Mammary epithelial cell (primary cell): ENCODE measurements at regions of chr12 and their contacts with region 1.

Region 1: DNA sequence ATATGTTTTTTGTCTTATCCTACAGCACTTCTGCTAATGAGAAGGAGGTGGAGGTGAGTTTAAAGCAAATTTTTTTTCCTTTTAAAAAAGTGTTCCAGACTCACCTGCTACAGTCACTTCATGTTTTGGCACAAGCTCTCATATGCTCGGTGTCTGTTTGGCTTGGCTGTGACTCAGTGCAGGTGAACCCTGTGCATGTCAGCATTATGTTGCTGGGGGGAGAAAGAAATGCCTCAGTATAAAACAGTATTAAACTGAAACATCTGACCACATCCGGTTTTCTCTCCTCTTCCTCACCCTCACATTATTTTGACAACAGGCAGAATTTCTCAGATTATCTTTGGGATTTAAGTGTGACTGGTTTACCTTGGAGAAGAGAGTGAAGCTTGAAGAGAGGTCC is 105.2 kb downstream of the DNAI7 start:
- DNase-seq: peak; percentile 73
- H3K4me3 ChIP-seq: no peak overlapping the region
- H3K27ac ChIP-seq: no peak overlapping the region
- H3K4me1 ChIP-seq: peaks cover 9% of the 10 kb centered on the region
- H3K27me3 ChIP-seq: no peaks in the 10 kb centered on the region
- CTCF ChIP-seq: no peak

Region 2: DNA sequence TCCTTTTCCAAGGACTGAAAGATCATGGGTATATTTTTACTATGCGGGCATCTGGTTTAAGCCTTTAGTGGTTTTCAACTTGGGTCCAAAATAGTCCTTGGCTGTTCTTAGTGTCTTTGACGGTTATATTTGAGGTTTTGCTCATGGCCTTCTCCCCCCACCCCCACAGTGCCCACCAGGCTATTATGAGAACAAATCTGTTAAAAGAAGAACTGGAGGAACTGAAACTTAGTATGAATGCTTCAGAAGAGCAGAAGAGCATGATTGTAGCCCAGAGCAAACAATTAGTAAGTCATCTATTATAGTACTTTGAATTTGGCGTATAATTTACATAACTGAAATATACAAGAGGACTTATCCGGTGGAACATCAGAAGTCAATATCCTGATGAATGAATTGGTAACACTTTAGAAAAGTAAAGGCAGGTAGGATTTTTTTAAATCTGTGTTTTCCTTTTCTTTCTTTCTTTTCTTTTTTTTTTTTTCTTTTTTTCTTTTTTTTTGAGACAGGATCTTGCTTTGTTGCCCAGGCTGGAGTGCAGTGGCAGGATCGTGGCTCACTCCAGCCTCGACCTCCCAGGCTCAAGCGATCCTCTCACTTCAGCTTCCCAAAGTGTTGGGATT is 69.0 kb before region 1 on chr12:
- CTCF ChIA-PET with region 1: no interaction called
- dilution Hi-C with region 1: loop called (anchors 10 kb)
- in situ Hi-C with region 1: no loop called
- intact Hi-C with region 1: no loop called
- DNase-seq: no peak
- H3K4me3 ChIP-seq: no peak overlapping the region
- H3K27ac ChIP-seq: no peak overlapping the region
- H3K4me1 ChIP-seq: no peaks in the 10 kb centered on the region
- H3K27me3 ChIP-seq: no peaks in the 10 kb centered on the region
- CTCF ChIP-seq: no peak

Region 3: DNA sequence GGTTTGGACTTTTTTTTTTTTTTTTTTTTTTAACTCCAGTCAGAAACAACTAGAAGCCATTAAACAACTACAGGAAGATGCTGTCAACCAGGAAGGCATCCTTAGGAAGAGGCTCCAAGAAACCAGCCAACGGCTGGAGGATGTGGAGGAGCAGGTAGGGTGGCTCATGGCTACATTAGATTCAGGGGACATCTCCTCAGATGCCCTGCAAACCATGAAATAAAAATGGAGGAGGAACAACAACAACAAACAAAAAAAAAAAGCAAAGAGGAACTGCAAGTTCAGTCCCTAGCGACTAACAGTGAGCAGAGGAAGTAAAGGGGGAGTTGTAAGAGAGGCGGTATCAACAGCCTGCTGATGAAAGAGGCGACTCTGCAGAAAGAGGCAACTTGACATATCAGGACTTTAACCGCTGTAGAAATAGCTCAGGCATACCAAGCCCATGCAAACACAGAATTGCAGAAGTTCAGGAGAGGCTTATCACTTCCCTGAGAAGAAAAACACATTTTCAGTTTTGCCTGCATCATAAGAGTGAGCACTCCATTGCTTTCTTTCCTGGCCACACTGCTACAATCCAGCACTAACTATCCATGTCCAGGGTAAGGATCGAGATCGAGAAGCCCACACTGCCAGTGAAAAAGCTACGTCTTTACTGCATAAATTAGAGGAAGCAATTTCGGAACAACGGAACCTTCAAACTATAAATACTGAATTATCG is 37.4 kb before region 1 on chr12:
- CTCF ChIA-PET with region 1: no interaction called
- dilution Hi-C with region 1: no loop called
- in situ Hi-C with region 1: no loop called
- intact Hi-C with region 1: no loop called
- DNase-seq: no peak
- H3K4me3 ChIP-seq: no peak overlapping the region
- H3K27ac ChIP-seq: no peak overlapping the region
- H3K4me1 ChIP-seq: peaks cover 33% of the 10 kb centered on the region
- H3K27me3 ChIP-seq: no peaks in the 10 kb centered on the region
- CTCF ChIP-seq: no peak